H1 (cell line): ENCODE measurements at regions of chr1 and their contacts with region 1.

Region 1: GRCh38 chr1:205354259-205354904 is 2.3 kb downstream of the KLHDC8A start:
- DNase-seq: peak in 1 of 2 experiments; percentile 69
- H3K4me3 ChIP-seq: no peak overlapping the region
- H3K27ac ChIP-seq: no peak overlapping the region
- H3K4me1 ChIP-seq: peaks cover 22 to 47% (median 31%) of the 10 kb centered on the region in 4 experiments
- H3K27me3 ChIP-seq: no peaks in the 10 kb centered on the region
- CTCF ChIP-seq: peak in 2 of 3 experiments; percentile 75 to 84; a peak in 3 of 4 replicates
- EP300 ChIP-seq: no peak
- POLR2A ChIP-seq: no peak
- RAD21 ChIP-seq: peak; percentile 56 to 66

Region 2: GRCh38 chr1:205321164-205321958 is 33.0 kb before region 1 on chr1 and contains the start of gene NUAK2:
- CTCF ChIA-PET with region 1: interaction called, 40 read pairs
- POLR2A ChIA-PET with region 1: interaction called, 6 read pairs
- DNase-seq: peak; percentile 82 to 96
- H3K4me3 ChIP-seq: peak within 1 kb of the TSS; percentile 67 to 93 (median 80)
- H3K27ac ChIP-seq: peak within 1 kb of the TSS; percentile 81
- H3K4me1 ChIP-seq: peaks cover 26 to 37% (median 31%) of the 10 kb centered on the region in 4 experiments
- H3K27me3 ChIP-seq: no peaks in the 10 kb centered on the region
- CTCF ChIP-seq: no peak
- EP300 ChIP-seq: no peak
- POLR2A ChIP-seq: peak; percentile 63 to 92
- RAD21 ChIP-seq: no peak
- total RNA-seq, gene NUAK2: 12.7 and 12.9 TPM in 2 replicates

Region 3: GRCh38 chr1:205344066-205344928 is 10.1 kb before region 1 on chr1:
- CTCF ChIA-PET with region 1: interaction called, 18 read pairs
- POLR2A ChIA-PET with region 1: no interaction called
- DNase-seq: peak in 1 of 2 experiments; percentile 72
- H3K4me3 ChIP-seq: peak overlapping the region; percentile 52 to 70 (median 56)
- H3K27ac ChIP-seq: no peak overlapping the region
- H3K4me1 ChIP-seq: peaks cover 5 to 10% (median 8%) of the 10 kb centered on the region in 4 experiments
- H3K27me3 ChIP-seq: peaks cover 11 to 30% (median 29%) of the 10 kb centered on the region in 4 experiments
- CTCF ChIP-seq: no peak
- EP300 ChIP-seq: no peak
- POLR2A ChIP-seq: no peak
- RAD21 ChIP-seq: no peak

Region 4: DNA sequence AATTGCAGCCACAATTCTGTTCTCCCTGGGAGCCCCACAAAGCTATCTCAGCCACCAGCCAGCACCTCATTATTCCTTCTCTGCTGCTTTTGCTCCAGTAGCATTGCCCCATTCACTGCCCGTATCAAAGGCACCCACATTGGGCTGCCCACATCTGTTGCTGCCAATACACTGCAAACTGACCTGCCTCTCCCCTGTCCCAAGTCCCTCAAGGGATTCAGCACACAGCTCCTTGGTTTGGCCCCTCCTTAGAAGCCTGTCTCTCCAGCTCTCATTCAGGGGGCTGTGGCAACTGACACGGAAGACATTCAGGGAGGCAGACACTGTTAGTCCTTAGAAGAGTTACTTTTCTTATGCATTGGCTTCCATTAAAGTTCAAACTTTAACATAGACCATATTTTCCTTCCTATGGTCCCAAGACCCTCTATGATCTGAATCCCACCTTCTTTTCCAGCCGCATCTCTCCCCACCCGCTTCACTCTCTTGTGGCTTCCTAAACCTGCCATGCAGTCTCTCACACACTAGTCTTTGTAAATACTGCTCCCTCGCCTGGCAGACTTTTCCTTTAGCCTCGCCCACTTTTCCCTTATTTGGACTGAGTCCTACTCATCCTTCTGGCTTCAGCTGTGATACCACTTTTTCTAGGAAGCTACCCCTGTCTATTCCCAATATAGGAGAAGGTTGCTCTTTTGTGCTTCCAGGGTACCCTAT is 21.6 kb after region 1 on chr1:
- CTCF ChIA-PET with region 1: interaction called, 207 read pairs
- POLR2A ChIA-PET with region 1: interaction called, 5 read pairs
- DNase-seq: no peak
- H3K4me3 ChIP-seq: peak overlapping the region in 3 of 4 experiments; percentile 4 to 36 (median 30); a peak in 4 of 8 replicates
- H3K27ac ChIP-seq: 0 out of 2 replicates have a peak overlapping the region, but pooled peaks have one; percentile 0
- H3K4me1 ChIP-seq: peaks cover 9 to 25% (median 19%) of the 10 kb centered on the region in 4 experiments; a peak in 5 of 7 replicates
- H3K27me3 ChIP-seq: no peaks in the 10 kb centered on the region
- CTCF ChIP-seq: no peak
- EP300 ChIP-seq: no peak
- POLR2A ChIP-seq: no peak
- RAD21 ChIP-seq: no peak

Region 5: DNA sequence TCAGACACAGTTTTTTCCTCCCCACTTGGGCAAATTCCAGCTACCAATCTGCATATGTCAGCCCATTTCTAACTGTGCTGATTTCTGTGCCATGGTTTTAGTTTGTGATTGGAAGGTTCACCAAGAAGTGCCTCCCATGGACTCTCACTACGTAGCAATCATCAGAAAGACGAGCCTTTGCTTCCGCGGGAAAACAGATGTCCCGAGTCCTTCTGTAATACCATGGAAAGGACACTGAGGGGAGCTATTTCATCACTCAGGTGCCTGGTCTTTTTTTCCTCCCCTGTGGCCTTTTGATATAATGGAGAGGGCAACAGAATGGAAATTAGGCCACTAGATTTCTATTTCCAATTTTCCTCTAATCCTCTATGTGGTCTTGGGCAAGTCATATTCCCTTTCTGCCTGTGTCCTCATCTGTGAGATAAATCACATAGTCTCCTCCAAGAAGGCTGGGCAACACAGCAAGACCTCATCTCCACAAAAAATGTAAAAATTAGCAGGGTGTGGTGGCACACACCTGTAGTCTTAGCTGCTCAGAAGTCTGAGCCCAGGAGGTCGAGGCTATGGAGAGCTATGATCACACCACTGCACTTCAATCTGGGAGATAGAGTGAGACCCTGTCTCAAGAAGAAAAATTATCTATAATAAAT is 42.7 kb after region 1 on chr1:
- CTCF ChIA-PET with region 1: interaction called, 16 read pairs
- POLR2A ChIA-PET with region 1: no interaction called
- DNase-seq: no peak
- H3K4me3 ChIP-seq: no peak overlapping the region
- H3K27ac ChIP-seq: no peak overlapping the region
- H3K4me1 ChIP-seq: no peaks in the 10 kb centered on the region
- H3K27me3 ChIP-seq: no peaks in the 10 kb centered on the region
- CTCF ChIP-seq: peak; percentile 27 to 93 (median 90)
- EP300 ChIP-seq: 0 out of 3 replicates have a peak, but pooled peaks of 1 of the 2 experiments have one; percentile 20
- POLR2A ChIP-seq: no peak
- RAD21 ChIP-seq: peak; percentile 99 to 100

Region 6: DNA sequence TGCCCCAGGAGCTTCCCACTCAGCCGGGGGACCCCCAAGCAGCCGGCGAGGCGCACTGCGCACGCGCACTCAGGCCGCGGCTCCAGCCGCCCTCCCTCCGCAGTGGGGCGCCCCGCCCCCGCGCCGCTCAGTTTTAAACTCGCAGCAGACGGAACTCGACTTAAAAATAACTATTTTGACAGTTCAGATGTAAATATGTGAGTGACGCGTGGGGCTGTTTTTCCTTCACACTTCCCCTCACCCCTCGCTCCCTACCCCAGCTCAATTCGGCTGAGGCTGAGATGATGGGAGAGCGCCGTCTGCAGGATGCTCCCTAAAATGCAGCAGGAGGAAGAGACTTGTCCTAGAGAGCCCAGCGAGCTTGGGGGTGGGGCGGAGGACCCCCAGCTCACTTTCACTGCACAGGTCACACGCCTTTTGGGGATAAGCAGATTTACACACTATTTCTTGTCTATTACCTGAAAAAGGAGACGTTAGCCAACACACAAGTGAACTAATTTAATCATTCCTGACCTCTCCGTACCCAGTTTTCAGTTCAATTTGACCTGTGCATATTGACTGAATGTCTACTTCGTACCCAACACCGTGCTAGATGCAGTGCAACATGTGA is 76.4 kb after region 1 on chr1:
- CTCF ChIA-PET with region 1: interaction called, 13 read pairs
- POLR2A ChIA-PET with region 1: no interaction called
- DNase-seq: peak in 1 of 2 experiments; percentile 91
- H3K4me3 ChIP-seq: peak overlapping the region; percentile 25 to 73 (median 44)
- H3K27ac ChIP-seq: no peak overlapping the region
- H3K4me1 ChIP-seq: peaks cover 2 to 5% (median 3%) of the 10 kb centered on the region in 4 experiments; a peak in 4 of 7 replicates
- H3K27me3 ChIP-seq: peaks cover 0 to 20% (median 11%) of the 10 kb centered on the region in 4 experiments; a peak in 6 of 7 replicates
- CTCF ChIP-seq: peak; percentile 85 to 97 (median 96)
- EP300 ChIP-seq: 0 out of 3 replicates have a peak, but pooled peaks of 1 of the 2 experiments have one; percentile 4
- POLR2A ChIP-seq: no peak; a peak in 1 of 3 replicates
- RAD21 ChIP-seq: peak; percentile 69 to 82

Region 7: DNA sequence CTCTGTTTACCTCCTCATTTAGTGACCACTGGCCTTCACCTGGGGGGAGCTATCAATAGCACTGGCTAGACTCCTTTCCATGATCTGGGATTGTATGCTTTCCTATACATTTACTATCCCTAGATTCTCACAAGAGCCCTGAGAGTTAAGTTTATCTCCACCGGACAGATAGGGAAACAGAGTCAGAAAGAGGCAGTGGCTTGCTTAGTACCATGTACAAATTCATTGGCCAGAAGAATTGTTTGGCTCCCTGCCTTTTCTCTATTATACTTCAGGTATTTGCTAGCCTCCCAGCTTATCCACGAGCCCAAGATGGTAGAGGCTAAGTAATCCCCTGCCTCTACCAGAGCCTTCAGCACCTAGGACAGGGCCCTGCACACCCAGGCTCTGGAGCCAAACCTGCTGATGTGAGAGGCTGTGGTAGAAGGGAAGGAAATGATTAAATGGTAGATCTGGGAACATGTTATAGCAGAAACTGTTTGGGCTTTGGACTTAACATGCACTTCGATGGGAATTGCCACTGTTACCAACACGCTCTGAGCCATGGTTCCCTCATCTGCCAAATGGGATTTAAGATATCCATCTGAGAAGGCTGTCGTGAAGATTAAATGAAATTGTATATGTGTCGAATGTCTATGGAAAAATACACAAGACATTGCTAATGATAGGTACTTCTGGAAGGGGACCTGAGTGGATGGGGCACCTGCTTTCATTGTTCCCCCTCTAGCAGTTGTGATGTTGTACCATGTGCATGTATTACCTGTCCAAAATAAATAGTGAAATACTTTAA is 104.6 kb after region 1 on chr1:
- CTCF ChIA-PET with region 1: interaction called, 10 read pairs
- POLR2A ChIA-PET with region 1: interaction called, 3 read pairs
- DNase-seq: peak in 1 of 2 experiments; percentile 80
- H3K4me3 ChIP-seq: no peak overlapping the region
- H3K27ac ChIP-seq: no peak overlapping the region
- H3K4me1 ChIP-seq: peaks cover 7 to 23% (median 13%) of the 10 kb centered on the region in 4 experiments
- H3K27me3 ChIP-seq: peaks cover 0 to 2% (median 0%) of the 10 kb centered on the region in 4 experiments; a peak in 2 of 7 replicates
- CTCF ChIP-seq: no peak
- EP300 ChIP-seq: no peak
- POLR2A ChIP-seq: no peak
- RAD21 ChIP-seq: peak in 1 of 2 experiments; percentile 32; a peak in 1 of 4 replicates

Region 8: DNA sequence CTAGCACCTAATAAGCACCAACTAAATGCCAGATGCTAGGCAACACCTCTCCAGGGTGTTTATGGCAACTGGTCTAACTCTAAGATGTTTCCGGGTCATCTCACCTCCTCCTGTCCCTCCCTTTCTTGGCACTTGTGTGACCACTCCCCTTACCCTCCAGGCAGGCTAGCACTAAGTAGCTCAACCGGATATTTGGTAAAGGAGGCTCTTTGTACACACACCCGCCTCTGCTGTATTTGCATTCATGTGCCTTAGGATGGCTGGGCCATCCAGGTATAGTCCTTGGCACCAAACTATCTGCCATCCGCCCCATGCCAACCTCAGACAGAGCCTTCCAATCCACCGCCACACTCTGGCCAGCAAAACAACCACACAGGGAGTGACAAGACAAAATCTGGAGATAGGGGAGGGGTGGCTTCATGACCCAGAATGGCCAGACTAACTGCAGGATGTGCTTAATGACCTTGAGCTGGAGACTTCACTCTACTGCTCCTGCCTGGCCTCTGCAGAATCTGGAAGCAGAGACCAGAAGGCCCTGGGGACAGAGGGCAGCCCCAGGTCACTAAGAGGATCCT is 209.6 kb after region 1 on chr1:
- CTCF ChIA-PET with region 1: no interaction called
- POLR2A ChIA-PET with region 1: no interaction called
- DNase-seq: peak in 1 of 2 experiments; percentile 37
- H3K4me3 ChIP-seq: no peak overlapping the region
- H3K27ac ChIP-seq: no peak overlapping the region
- H3K4me1 ChIP-seq: peaks cover 0 to 5% (median under 1%) of the 10 kb centered on the region in 4 experiments; a peak in 3 of 7 replicates
- H3K27me3 ChIP-seq: peaks cover 9 to 20% (median 18%) of the 10 kb centered on the region in 4 experiments
- CTCF ChIP-seq: no peak
- EP300 ChIP-seq: no peak
- POLR2A ChIP-seq: no peak
- RAD21 ChIP-seq: no peak